ENCODE measurements at regions of chr16 and their contacts with region 1.

Region 1: GRCh38 chr16:31868691-31869167 is 4.9 kb upstream of the ZNF267 start:
- DNase-seq: peak; percentile 62 to 81 (median 74)
- ATAC-seq: peak; percentile 20
- H3K4me3 ChIP-seq: peak overlapping the region; percentile 42
- H3K4me3 Mint-ChIP-seq: peak overlapping the region; percentile 67 to 86 (median 74)
- H3K27ac ChIP-seq: peak overlapping the region; percentile 60
- H3K27ac Mint-ChIP-seq: peak overlapping the region; percentile 8 to 95 (median 85)
- H3K4me1 ChIP-seq: peaks cover 32 to 36% of the 10 kb centered on the region in 2 donors
- H3K4me1 Mint-ChIP-seq: peaks cover 27 to 65% (median 50%) of the 10 kb centered on the region in 7 donors
- H3K27me3 ChIP-seq: no peaks in the 10 kb centered on the region
- H3K27me3 Mint-ChIP-seq: peaks cover 0 to 5% (median 0%) of the 10 kb centered on the region in 5 donors

Region 2: DNA sequence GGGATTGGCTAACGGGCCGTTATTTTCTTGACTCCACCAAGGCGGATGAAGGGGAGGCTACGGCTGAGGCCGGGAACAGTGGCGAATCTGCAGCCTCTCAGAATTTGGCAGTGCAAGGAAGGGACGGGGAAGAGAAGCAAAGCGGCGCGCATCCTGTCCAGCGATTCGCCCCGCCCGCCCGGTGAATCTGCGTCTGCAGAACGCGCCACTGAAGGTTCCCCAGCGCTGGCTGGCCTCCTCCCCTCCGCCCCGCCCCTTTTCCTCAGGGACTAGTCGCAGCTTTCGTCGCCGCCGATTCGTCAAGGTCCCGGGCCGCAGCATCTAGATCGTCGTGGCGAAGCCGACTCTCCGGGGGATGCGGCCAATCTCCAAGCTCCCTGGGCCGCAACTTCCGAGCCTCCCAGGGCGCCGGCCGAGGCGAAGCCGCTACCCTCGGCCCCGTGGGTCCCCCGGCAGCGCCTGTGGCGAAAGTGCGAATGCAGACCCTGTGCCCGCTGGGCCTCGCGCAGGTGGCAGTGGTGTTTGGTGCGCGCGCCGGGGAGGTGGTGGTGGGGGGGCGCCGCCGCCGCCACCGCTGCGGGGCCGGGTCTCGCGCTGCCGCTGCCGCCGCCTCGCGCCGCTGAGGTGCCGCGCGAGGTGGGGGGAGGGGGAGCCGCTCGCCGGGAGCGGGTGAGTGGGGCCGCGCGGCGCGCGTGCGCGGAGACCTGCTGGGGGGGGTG is 911.1 kb before region 1 on chr16 and contains the start of gene SETD1A:
- CTCF ChIA-PET with region 1: interaction called, 3 read pairs
- POLR2A ChIA-PET with region 1: no interaction called
- intact Hi-C with region 1: loop called (anchors 2 to 10 kb)
- DNase-seq: peak; percentile 94 to 99 (median 97)
- ATAC-seq: peak; percentile 93
- H3K4me3 ChIP-seq: peak within 1 kb of the TSS; percentile 100
- H3K4me3 Mint-ChIP-seq: peak within 1 kb of the TSS; percentile 81 to 97 (median 96)
- H3K27ac ChIP-seq: peak within 1 kb of the TSS; percentile 93
- H3K27ac Mint-ChIP-seq: peak within 1 kb of the TSS; percentile 97 to 100 (median 98)
- H3K4me1 ChIP-seq: peaks cover 16 to 22% of the 10 kb centered on the region in 2 donors
- H3K4me1 Mint-ChIP-seq: peaks cover 23 to 46% (median 29%) of the 10 kb centered on the region in 7 donors
- H3K27me3 ChIP-seq: no peaks in the 10 kb centered on the region
- H3K27me3 Mint-ChIP-seq: peaks cover 0 to 3% (median 0%) of the 10 kb centered on the region in 5 donors
- total RNA-seq, gene SETD1A: 27.0 to 47.2 (median 36.8) TPM

Region 3: DNA sequence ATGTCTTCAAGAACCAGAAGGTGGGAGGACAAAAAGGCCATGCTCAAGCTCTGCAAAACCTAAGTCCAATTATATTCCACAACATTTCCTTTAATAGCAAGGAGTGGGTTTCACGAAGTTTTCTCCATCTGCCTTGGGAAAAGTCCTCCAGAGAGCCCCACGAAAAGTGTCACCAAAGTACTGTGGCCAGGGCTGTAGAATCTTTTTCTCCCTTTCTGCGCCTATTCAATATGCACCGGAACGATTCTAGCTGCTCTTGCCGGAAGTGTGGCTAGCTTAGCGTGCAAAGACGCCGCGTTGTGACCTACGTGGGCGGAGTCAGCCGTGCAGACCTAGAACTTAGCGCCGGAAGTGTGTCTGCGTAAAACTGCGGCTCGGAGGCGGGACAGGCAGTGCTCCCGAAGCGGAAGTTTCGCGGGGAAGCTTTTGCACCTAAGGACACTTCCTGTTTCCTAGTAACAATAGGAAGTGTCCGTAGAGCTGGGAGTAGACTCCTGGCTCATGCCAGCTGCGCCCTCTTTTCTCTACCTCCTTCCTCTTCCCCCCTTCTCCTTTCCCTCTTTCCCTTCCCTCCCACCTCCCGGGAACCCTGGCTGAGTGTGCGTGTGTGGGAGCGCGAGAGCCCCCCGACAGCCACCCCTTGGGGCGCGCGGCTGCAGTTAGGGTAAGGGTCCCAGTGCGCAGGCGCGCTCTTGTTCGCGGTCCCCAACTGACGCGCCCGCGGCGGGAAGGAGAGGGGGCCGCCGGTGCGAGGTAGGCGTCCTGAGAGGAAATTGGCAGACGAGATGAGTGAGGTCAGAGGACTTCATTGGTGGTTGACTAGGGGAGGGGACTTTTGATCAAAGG is 794.5 kb before region 1 on chr16 and contains the starts of genes ZNF646 and ZNF668:
- CTCF ChIA-PET with region 1: interaction called, 3 read pairs
- POLR2A ChIA-PET with region 1: interaction called, 9 read pairs
- intact Hi-C with region 1: loop called in 1 of 2 experiments (anchors 1 kb)
- DNase-seq: peak; percentile 84 to 99 (median 96)
- ATAC-seq: peak; percentile 90
- H3K4me3 ChIP-seq: peak within 1 kb of the TSS; percentile 89
- H3K4me3 Mint-ChIP-seq: peak within 1 kb of the TSS; percentile 85 to 99 (median 96)
- H3K27ac ChIP-seq: peak within 1 kb of the TSS; percentile 91
- H3K27ac Mint-ChIP-seq: peak within 1 kb of the TSS; percentile 92 to 98 (median 97)
- H3K4me1 ChIP-seq: peaks cover 9 to 18% of the 10 kb centered on the region in 2 donors
- H3K4me1 Mint-ChIP-seq: peaks cover 32 to 48% (median 36%) of the 10 kb centered on the region in 7 donors
- H3K27me3 ChIP-seq: no peaks in the 10 kb centered on the region
- H3K27me3 Mint-ChIP-seq: no peaks in the 10 kb centered on the region
- total RNA-seq, gene ZNF646: 22.2 to 49.1 (median 30.4) TPM
- total RNA-seq, gene ZNF668: 10.7 to 15.2 (median 12.6) TPM

Region 4: GRCh38 chr16:31179747-31180459 is 688.8 kb before region 1 on chr16 and contains the start of gene FUS:
- CTCF ChIA-PET with region 1: no interaction called
- POLR2A ChIA-PET with region 1: interaction called, 10 read pairs
- intact Hi-C with region 1: loop called (anchors 2 to 5 kb)
- DNase-seq: peak; percentile 88 to 97 (median 95)
- ATAC-seq: peak; percentile 87
- H3K4me3 ChIP-seq: peak within 1 kb of the TSS; percentile 76
- H3K4me3 Mint-ChIP-seq: peak within 1 kb of the TSS; percentile 92 to 99 (median 96)
- H3K27ac ChIP-seq: peak within 1 kb of the TSS; percentile 90
- H3K27ac Mint-ChIP-seq: peak within 1 kb of the TSS; percentile 96 to 100 (median 99)
- H3K4me1 ChIP-seq: peaks cover 56% of the 10 kb centered on the region in 2 donors
- H3K4me1 Mint-ChIP-seq: peaks cover 49 to 72% (median 56%) of the 10 kb centered on the region in 7 donors
- H3K27me3 ChIP-seq: no peaks in the 10 kb centered on the region
- H3K27me3 Mint-ChIP-seq: peaks cover 0 to 3% (median 0%) of the 10 kb centered on the region in 5 donors
- total RNA-seq, gene FUS: 597 to 956 (median 714) TPM

Region 5: GRCh38 chr16:31354394-31355291 is 514.1 kb before region 1 on chr16 and contains the start of gene ITGAX:
- CTCF ChIA-PET with region 1: no interaction called
- POLR2A ChIA-PET with region 1: no interaction called
- intact Hi-C with region 1: loop called in 1 of 2 experiments (anchors 2 kb)
- DNase-seq: peak in 1 of 9 donors; percentile 81
- ATAC-seq: peak; percentile 68
- H3K4me3 ChIP-seq: no peak within 1 kb of the TSS
- H3K4me3 Mint-ChIP-seq: peak within 1 kb of the TSS in 5 of 10 donors; percentile 13 to 87 (median 56)
- H3K27ac ChIP-seq: no peak within 1 kb of the TSS
- H3K27ac Mint-ChIP-seq: peak within 1 kb of the TSS in 7 of 9 donors; percentile 57 to 97 (median 81)
- H3K4me1 ChIP-seq: peaks cover 8 to 13% of the 10 kb centered on the region in 2 donors
- H3K4me1 Mint-ChIP-seq: peaks cover 7 to 65% (median 14%) of the 10 kb centered on the region in 7 donors
- H3K27me3 ChIP-seq: no peaks in the 10 kb centered on the region
- H3K27me3 Mint-ChIP-seq: no peaks in the 10 kb centered on the region
- total RNA-seq, gene ITGAX: 4.0 to 306 (median 40.2) TPM

Region 6: GRCh38 chr16:31507929-31508705 is 360.6 kb before region 1 on chr16 and contains the start of gene RUSF1:
- CTCF ChIA-PET with region 1: interaction called, 4 read pairs
- POLR2A ChIA-PET with region 1: interaction called, 5 read pairs
- intact Hi-C with region 1: loop called (anchors 2 to 5 kb)
- DNase-seq: peak; percentile 63 to 84 (median 77)
- ATAC-seq: peak; percentile 93
- H3K4me3 ChIP-seq: peak within 1 kb of the TSS; percentile 77
- H3K4me3 Mint-ChIP-seq: peak within 1 kb of the TSS; percentile 83 to 98 (median 92)
- H3K27ac ChIP-seq: peak within 1 kb of the TSS; percentile 93
- H3K27ac Mint-ChIP-seq: peak within 1 kb of the TSS; percentile 93 to 98 (median 97)
- H3K4me1 ChIP-seq: peaks cover 27% of the 10 kb centered on the region in 2 donors
- H3K4me1 Mint-ChIP-seq: peaks cover 30 to 66% (median 53%) of the 10 kb centered on the region in 7 donors
- H3K27me3 ChIP-seq: no peaks in the 10 kb centered on the region
- H3K27me3 Mint-ChIP-seq: no peaks in the 10 kb centered on the region
- total RNA-seq, gene RUSF1: 47.3 to 118 (median 89.5) TPM

Region 7: DNA sequence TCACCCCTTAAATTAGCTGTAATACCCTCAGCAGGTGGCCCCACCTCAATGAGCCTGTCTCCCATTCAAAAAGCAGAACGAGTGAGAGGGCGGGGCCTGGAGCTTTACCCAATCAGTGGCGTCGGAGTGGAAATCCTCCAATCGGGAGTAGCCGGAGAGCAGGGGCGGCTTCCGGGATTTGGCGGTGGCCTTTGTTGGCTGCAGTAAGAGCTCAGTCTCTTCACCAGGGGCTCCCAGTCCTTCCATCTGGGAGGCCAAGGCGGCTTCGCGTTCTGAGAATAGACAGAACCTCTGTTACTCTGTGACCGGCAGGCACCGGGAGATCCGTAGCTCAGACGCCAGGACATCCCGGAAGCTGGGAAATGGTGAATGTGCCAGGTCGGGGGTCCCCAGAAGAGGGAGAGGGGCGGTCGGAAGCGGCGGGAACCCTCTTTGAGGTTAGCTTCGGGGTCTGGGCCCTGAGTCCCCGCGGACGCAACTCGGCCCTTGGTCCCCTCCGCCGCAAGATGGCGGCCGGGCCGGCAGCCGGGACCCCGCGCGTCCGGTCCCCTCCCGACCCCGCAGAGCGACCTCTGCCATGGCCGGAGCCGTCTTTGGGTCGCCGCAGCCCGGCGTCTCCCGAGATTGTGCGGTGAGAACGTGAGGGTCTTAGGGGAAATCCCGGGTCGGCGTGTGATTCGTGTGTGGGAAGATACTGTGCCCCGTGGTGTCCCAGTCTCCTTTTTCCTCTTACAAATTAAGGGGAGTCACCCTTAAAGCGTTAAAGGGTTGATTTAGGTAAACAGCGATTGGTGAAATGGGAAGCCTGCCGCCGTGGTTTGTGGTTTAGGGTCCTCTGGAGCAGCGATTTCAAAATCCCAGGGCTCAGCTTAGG is 155.4 kb before region 1 on chr16:
- CTCF ChIA-PET with region 1: interaction called, 3 read pairs
- POLR2A ChIA-PET with region 1: interaction called, 11 read pairs
- intact Hi-C with region 1: loop called (anchors 1 to 2 kb)
- DNase-seq: peak; percentile 74 to 91 (median 87)
- ATAC-seq: peak; percentile 88
- H3K4me3 ChIP-seq: peak overlapping the region; percentile 98
- H3K4me3 Mint-ChIP-seq: peak overlapping the region; percentile 78 to 100 (median 99)
- H3K27ac ChIP-seq: peak overlapping the region; percentile 88
- H3K27ac Mint-ChIP-seq: peak overlapping the region; percentile 97 to 100 (median 98)
- H3K4me1 ChIP-seq: peaks cover 15 to 34% of the 10 kb centered on the region in 2 donors
- H3K4me1 Mint-ChIP-seq: peaks cover 34 to 68% (median 62%) of the 10 kb centered on the region in 7 donors
- H3K27me3 ChIP-seq: no peaks in the 10 kb centered on the region
- H3K27me3 Mint-ChIP-seq: no peaks in the 10 kb centered on the region

Measured in naive thymus-derived CD4-positive, alpha-beta T cell (primary cell).